ENCODE measurements at regions of chr7 and their contacts with region 1.

Region 1: DNA sequence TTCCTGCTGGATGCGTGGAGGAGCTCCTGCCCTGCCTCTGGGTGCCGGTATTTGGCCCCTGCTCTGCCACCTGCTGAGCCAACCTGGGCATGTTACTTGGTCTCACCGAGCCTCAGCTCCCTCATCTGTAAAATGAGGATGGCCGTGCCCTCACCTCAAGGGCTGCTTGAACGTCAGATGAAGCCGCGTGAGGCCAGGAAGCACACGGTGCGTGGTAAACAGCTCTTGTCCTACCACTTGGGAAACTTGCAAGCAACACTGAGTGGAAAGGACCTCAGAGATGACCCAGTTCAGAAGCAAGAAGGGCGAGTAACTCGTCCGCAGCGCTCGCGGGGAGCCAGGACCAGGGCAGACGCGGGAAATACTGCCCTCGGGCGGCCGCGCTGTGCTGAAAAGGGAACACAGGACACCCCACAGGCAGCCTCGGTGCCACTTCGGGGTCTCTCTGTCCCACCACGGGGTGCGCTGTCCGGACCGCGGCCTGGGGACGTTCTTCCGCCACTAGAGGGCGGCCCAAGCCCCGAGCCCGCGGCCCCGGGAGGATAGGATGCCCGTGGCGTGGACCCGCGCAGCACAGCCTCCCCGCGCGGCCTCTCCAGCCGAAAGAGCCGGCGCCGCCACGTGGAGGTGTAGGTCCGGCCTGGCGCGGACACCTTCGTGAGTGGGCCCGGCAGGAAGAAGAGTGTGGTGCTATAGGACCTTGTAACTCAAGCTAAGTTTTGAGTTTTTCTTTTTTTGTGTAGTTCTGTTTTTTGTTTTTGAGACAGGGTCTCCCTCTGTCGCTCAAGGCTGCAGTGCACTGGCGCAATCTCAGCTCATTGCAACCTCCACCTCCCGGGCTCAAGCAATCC is 94.1 kb downstream of the PRKAG2 start:
- DNase-seq: peak; percentile 52
- H3K4me3 ChIP-seq: no peak overlapping the region
- H3K27ac ChIP-seq: peak overlapping the region; percentile 18 to 60
- H3K4me1 ChIP-seq: peaks cover 3% of the 10 kb centered on the region
- H3K27me3 ChIP-seq: no peaks in the 10 kb centered on the region
- CTCF ChIP-seq: peak; percentile 82 to 94 (median 84)
- POLR2A ChIP-seq: no peak

Region 2: GRCh38 chr7:151876899-151877777 is 94.3 kb after region 1 on chr7 and contains the start of gene PRKAG2:
- intact Hi-C with region 1: loop called (anchors 5 kb)
- DNase-seq: peak; percentile 73
- H3K4me3 ChIP-seq: peak within 1 kb of the TSS; percentile 93 to 97
- H3K27ac ChIP-seq: peak within 1 kb of the TSS; percentile 99
- H3K4me1 ChIP-seq: peaks cover 10% of the 10 kb centered on the region
- H3K27me3 ChIP-seq: no peaks in the 10 kb centered on the region
- CTCF ChIP-seq: peak in 2 of 4 experiments; percentile 2 to 43
- POLR2A ChIP-seq: peak; percentile 39
- total RNA-seq, gene PRKAG2: 31.6 to 38.1 TPM

Region 3: GRCh38 chr7:151932358-151932876 is 149.6 kb after region 1 on chr7:
- intact Hi-C with region 1: loop called (anchors 5 kb)
- DNase-seq: peak; percentile 28
- H3K4me3 ChIP-seq: no peak overlapping the region
- H3K27ac ChIP-seq: peak overlapping the region; percentile 60 to 78
- H3K4me1 ChIP-seq: no peaks in the 10 kb centered on the region
- H3K27me3 ChIP-seq: no peaks in the 10 kb centered on the region
- CTCF ChIP-seq: no peak
- POLR2A ChIP-seq: peak; percentile 46

Region 4: DNA sequence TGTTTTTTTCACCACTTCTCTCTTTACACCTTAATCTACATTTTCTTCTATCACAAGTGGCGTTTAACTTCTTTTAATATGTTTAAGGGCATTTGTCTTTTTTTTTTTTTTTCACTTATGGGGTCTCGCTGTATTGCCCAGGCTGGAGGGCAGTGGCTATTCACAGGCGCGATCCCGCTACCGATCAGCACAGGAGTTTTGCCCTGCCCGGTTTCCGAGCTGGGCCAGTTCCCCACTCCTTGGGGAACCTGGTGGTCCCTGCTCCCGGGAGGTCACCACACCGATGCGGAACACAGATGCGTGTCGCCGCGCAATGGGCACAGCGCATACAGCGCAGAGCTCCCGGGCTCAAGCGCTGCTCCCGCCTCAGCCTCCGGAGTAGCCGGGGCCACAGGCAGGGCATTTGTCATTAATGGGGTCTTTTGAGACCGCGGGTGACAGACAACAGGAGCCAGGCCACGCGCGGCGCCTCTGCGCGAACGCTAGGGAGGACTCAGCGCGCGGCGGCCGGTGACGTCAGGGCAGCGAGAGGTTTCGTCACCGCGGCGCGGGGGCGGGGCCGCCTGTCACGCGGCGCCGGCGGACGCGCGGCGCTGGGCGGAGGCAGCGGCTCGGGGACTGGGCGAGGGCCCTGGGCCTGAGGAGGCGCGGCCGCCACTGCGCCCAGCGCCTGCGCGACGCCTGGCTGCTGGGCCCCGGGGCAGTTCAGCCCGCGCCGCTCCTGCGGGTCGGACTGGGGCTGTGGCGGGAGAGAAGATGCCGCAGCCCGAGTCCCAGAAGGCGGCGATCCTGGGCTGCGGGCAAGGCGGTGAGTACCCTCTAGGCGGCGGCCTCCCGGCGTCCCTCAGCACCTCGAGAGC is 242.5 kb after region 1 on chr7 and contains the start of gene GALNT11:
- intact Hi-C with region 1: loop called (anchors 10 kb)
- DNase-seq: peak; percentile 79
- H3K4me3 ChIP-seq: peak within 1 kb of the TSS; percentile 70 to 80
- H3K27ac ChIP-seq: peak within 1 kb of the TSS; percentile 92 to 93
- H3K4me1 ChIP-seq: no peaks in the 10 kb centered on the region
- H3K27me3 ChIP-seq: no peaks in the 10 kb centered on the region
- CTCF ChIP-seq: peak in 3 of 4 experiments; percentile 28 to 61 (median 57)
- POLR2A ChIP-seq: peak; percentile 82
- total RNA-seq, gene GALNT11: 50.3 to 76.2 TPM

Measured in prostate gland (tissue), 2 donors.